Activated T-helper 2 cell treated with anti-CD3 and anti-CD28 coated beads, Interferon-gamma antibody, Interleukin-2, Interleukin-4, amounts not matched to agents 10 μg/mL and 5 μg/mL and 100 μg/mL, durations not matched to agents 14 hours and 24 hours and 36 hours (primary cell): ENCODE measurements at regions of chr13 and their contacts with region 1.

Region 1: DNA sequence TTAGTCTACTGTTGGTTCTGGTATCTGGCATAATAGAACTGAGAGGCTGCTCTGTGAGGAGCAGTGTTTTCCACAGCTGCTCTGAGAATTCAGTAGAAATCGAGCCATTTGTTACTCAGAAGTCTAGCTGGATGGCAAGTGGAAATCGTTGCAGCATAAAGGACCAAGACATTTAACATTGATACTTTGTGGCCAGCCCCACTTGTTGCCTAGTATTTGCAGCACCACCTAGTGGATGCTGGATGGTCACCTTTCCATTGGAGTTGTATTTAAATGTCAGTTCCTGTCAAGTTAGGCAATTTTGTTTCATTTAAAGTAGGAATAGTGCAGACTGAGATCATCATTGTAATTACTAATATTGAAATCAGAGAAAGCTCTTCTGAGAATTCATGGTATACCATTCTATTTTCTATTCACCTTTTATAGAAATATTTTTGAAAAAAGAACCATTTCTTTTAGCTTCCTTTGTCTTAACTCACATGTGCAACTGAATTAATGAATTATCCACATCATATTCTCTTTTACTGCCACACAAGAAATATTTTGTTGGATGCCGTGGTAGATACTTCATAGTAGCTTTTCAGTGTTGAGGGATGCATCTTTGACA is 64.6 kb downstream of the PDS5B start:
- DNase-seq: peak; percentile 41
- H3K4me3 Mint-ChIP-seq: no peak overlapping the region
- H3K27ac Mint-ChIP-seq: peak overlapping the region; percentile 70
- H3K4me1 Mint-ChIP-seq: peaks cover 35% of the 10 kb centered on the region
- H3K27me3 Mint-ChIP-seq: no peaks in the 10 kb centered on the region

Region 2: GRCh38 chr13:32639502-32640105 is 11.2 kb before region 1 on chr13:
- intact Hi-C with region 1: loop called (anchors 1 kb)
- DNase-seq: no peak
- H3K4me3 Mint-ChIP-seq: no peak overlapping the region
- H3K27ac Mint-ChIP-seq: no peak overlapping the region
- H3K4me1 Mint-ChIP-seq: peaks cover 29% of the 10 kb centered on the region
- H3K27me3 Mint-ChIP-seq: no peaks in the 10 kb centered on the region

Region 3: DNA sequence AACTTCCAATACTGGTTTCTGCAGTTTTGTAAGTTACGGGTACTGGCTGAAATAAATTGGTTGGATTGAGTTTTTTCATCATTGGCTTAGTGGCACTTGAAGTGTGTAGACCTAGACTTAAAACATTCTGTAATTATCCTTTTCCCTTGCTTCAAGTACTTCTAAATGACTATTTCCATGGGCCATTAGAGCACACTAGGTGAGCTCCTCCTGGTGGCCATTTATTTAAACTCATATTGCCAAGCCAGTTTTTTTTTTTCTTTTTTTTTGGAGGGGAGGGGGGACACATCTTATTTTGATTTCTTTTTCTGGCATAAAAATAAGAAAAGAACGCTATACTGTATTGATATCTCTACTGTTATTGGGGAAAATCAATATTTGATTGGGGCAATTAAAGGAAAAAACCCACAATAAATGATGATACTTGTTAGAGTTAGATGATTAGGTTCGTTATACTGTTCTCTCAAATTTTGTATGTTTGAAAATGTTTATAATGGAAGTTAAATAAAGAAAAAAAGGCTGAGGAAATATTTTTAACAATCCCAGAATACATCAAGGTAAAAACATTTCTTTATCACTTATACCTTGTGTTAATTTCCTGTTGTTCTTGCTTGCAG is 18.3 kb after region 1 on chr13:
- intact Hi-C with region 1: loop called (anchors 1 kb)
- DNase-seq: no peak
- H3K4me3 Mint-ChIP-seq: no peak overlapping the region
- H3K27ac Mint-ChIP-seq: no peak overlapping the region
- H3K4me1 Mint-ChIP-seq: peaks cover 2% of the 10 kb centered on the region
- H3K27me3 Mint-ChIP-seq: no peaks in the 10 kb centered on the region

Region 4: GRCh38 chr13:32737111-32737571 is 86.3 kb after region 1 on chr13:
- intact Hi-C with region 1: loop called (anchors 1 kb)
- DNase-seq: no peak
- H3K4me3 Mint-ChIP-seq: peak overlapping the region; percentile 68
- H3K27ac Mint-ChIP-seq: peak overlapping the region; percentile 61
- H3K4me1 Mint-ChIP-seq: peaks cover 38% of the 10 kb centered on the region
- H3K27me3 Mint-ChIP-seq: no peaks in the 10 kb centered on the region

Region 5: DNA sequence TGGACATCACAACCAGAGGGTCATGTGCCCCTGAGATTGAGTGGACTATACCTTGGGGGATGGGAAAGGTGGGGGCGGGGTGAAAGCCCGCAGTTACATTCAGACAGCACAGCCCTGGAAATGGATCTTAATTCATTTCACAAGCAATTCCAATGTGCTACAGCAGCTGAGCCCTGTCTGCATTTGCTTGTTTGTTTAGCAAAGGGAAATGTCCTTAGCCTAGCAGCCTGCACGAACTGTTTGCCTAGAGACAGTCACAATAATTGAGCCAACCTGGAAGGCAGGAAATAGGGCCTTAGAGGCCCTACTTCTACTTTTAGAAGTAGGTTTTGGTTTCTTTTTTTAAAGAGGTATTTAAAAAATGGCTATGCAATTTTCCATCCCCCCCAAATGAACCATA is 188.1 kb after region 1 on chr13:
- intact Hi-C with region 1: no loop called
- DNase-seq: no peak
- H3K4me3 Mint-ChIP-seq: no peak overlapping the region
- H3K27ac Mint-ChIP-seq: no peak overlapping the region
- H3K4me1 Mint-ChIP-seq: peaks cover 25% of the 10 kb centered on the region
- H3K27me3 Mint-ChIP-seq: no peaks in the 10 kb centered on the region